IMR-90 (cell line): ENCODE measurements at regions of chr1 and their contacts with region 1.

Region 1: GRCh38 chr1:67214420-67215174 is 48.3 kb downstream of the IL23R start:
- DNase-seq: peak; percentile 29
- ATAC-seq: peak; percentile 62
- H3K4me3 ChIP-seq: no peak overlapping the region
- H3K27ac ChIP-seq: no peak overlapping the region
- H3K4me1 ChIP-seq: no peaks in the 10 kb centered on the region
- H3K27me3 ChIP-seq: no peaks in the 10 kb centered on the region
- CTCF ChIP-seq: peak; percentile 55
- POLR2A ChIP-seq: no peak
- RAD21 ChIP-seq: peak; percentile 36

Region 2: DNA sequence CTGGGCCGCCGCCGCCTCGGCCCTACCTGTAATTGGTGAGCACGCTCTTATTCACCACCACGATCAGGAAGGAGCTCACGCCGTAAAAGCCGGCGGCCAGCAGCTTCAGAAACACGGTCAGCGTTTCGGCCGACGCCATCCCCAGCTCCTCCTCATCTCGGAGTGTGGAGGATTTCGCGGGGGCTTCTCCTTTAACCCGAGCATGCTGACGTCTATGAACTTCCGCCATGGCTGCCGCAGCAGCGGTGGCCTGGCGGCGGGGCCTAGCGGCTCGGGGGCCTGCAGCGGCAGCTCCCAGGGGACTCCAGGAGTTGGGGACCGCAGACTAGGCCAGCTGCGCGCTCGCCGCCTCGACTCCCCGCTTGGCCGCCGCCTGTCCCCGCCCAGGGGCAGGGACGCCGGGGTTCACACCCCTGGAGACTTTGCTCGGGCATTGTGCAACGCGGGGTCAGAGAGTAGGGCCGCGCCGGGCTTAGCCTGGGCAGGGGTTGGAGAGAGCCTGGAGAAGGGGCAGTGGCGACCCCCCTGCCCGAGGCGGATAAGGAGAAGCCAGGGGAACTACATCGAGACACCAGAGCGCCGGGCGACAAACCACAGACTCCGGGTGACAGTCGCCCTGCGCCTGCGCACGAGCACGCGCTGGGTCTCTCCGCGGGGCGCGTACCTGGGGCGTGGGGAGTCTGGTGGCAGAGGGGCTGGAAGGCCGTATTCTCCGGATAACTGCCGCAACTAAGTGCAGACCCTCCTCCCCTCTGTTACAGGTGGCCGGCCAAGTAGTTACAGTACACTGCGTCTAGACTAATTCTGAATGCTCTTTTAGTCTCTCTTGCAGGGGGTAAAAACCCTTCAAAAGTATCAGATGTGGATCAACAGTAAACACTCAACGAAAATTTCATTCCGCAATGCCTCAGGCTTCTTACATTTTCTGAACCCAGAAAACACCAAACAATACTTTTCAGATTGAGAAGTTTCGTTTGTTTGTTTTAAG is 160.5 kb before region 1 on chr1 and contains the start of gene SLC35D1:
- CTCF ChIA-PET with region 1: no interaction called
- POLR2A ChIA-PET with region 1: no interaction called
- dilution Hi-C with region 1: no loop called
- in situ Hi-C with region 1: no loop called
- intact Hi-C with region 1: loop called (anchors 5 kb)
- DNase-seq: peak; percentile 53
- ATAC-seq: peak; percentile 74
- H3K4me3 ChIP-seq: peak within 1 kb of the TSS; percentile 93
- H3K27ac ChIP-seq: peak within 1 kb of the TSS; percentile 90
- H3K4me1 ChIP-seq: peaks cover 8% of the 10 kb centered on the region
- H3K27me3 ChIP-seq: no peaks in the 10 kb centered on the region
- CTCF ChIP-seq: no peak
- POLR2A ChIP-seq: peak; percentile 82
- RAD21 ChIP-seq: no peak
- total RNA-seq, gene SLC35D1: 16.3 and 23.1 TPM in 2 replicates